Astrocyte of the cerebellum (primary cell): ENCODE measurements at regions of chr10 and their contacts with region 1.

Region 1: DNA sequence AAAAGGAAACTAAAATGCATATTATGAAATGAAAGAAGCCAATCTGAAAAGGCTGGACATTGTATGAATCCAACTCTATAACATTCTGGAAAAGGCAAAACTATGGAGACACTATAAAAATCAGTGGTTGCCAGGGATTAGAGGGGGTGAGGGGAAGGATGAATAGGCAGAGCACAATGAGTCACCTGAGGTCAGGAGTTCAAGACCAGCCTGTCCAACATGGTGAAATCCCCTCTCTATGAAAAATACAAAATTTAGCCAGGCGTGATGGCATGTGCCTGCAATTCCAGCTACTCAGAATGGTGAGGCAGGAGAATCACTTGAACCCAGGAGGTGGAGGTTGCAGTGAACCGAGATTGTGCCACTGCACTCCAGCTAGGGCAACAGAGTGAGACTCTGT is 324.8 kb upstream of the PHYHIPL start:
- DNase-seq: no peak
- H3K4me3 ChIP-seq: no peak overlapping the region
- CTCF ChIP-seq: no peak

Region 2: GRCh38 chr10:58901092-58901646 is 49.6 kb after region 1 on chr10:
- in situ Hi-C with region 1: loop called (anchors 5 kb)
- DNase-seq: no peak
- H3K4me3 ChIP-seq: no peak overlapping the region
- CTCF ChIP-seq: no peak

Region 3: GRCh38 chr10:58942724-58943123 is 91.1 kb after region 1 on chr10:
- in situ Hi-C with region 1: no loop called
- DNase-seq: no peak
- H3K4me3 ChIP-seq: no peak overlapping the region
- CTCF ChIP-seq: no peak